ENCODE measurements at regions of chr6 and their contacts with region 1.

Region 1: GRCh38 chr6:16183187-16183664 is 54.3 kb downstream of the MYLIP start:
- DNase-seq: peak; percentile 60
- H3K4me3 Mint-ChIP-seq: no peak overlapping the region
- H3K27ac Mint-ChIP-seq: no peak overlapping the region
- H3K4me1 Mint-ChIP-seq: peaks cover 21% of the 10 kb centered on the region
- H3K27me3 Mint-ChIP-seq: peaks cover 12% of the 10 kb centered on the region

Region 2: DNA sequence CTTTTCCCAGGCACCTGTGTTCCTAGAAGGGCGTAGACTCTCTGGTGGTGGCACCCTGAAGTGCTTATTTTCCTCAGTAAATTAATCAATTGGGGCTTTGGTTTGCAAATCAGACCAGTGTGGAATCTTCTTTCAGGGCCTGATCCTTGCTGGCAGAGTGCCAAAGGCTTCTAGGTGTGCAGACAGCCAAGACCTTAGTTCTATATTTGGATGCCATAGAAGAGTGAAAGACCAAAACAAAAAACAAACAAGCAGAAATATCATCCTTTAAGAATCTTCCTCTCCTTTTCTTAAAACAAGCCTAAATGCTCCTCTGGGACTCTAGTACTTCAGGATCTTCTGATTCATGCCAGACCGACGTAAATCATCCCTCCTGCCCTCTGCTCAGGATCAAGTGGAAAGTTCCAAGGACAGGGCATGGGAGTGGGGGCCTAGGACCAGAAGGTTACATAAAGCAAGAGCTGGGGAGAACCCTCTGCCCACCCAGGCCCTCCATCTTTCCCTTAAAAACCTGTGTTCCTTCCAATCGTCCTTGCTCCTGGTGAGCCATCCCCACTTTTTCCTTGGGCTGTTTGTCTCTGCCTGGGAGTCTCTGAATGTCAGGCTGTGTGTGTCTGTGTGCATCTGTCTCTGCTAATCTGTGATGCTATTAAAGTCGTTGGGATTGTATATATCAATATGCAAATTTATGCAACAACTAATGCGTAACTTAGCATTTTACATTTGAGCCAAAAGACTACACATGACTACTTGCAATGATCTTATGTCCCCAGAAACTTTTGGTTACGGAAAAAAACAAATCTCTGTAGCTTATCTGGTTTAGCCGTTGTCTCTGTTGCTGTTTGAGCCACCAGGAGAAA is 124.8 kb before region 1 on chr6:
- intact Hi-C with region 1: loop called (anchors 10 kb)
- DNase-seq: no peak
- H3K4me3 Mint-ChIP-seq: no peak overlapping the region
- H3K27ac Mint-ChIP-seq: no peak overlapping the region
- H3K4me1 Mint-ChIP-seq: no peaks in the 10 kb centered on the region
- H3K27me3 Mint-ChIP-seq: peaks cover 1% of the 10 kb centered on the region

Region 3: DNA sequence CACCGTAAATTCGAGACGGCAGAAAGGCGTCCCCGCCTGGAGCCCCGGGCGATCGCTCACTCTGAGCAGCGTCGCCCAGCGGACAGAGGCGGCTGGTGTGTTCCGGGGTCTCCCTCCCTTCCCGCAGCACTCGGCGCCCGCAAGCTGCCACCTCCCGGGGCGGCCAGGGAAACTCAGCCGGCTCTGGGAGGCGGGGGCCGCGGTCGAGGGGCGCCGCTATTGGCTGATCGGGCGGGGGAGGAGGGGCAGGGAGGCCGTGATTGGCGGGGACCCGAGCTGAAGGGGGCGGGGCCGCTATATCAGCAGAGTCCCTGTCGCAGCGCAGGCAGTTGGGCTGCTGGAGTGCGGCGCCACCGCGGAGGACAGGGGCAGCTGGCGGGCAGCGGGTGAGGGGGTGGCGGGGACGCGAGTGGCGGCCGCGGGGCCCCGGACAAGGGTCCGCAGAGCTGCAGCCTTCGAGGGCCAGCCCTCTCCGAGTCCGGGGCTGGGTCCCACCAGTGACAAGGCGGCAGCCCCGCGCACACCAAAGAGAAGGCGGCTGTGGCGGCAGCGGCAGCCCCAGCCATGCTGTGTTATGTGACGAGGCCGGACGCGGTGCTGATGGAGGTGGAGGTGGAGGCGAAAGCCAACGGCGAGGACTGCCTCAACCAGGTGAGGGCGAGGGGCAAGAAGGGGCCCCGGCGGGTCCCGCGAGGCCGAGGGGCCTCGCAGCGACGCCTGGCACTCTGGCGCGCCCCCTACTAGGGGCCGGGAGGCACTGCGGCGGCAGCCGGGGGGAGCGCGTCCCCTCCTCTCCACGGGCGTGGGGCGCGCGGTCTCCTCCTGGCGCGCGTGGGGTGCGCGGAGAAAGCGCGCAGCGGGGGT is 54.2 kb before region 1 on chr6 and contains the start of gene MYLIP:
- intact Hi-C with region 1: loop called (anchors 1 kb)
- DNase-seq: peak; percentile 98
- H3K4me3 Mint-ChIP-seq: peak within 1 kb of the TSS; percentile 91
- H3K27ac Mint-ChIP-seq: peak within 1 kb of the TSS; percentile 93
- H3K4me1 Mint-ChIP-seq: peaks cover 32% of the 10 kb centered on the region
- H3K27me3 Mint-ChIP-seq: peaks cover 20% of the 10 kb centered on the region
- total RNA-seq, gene MYLIP: 18.3 and 18.5 TPM in 2 replicates

Region 4: DNA sequence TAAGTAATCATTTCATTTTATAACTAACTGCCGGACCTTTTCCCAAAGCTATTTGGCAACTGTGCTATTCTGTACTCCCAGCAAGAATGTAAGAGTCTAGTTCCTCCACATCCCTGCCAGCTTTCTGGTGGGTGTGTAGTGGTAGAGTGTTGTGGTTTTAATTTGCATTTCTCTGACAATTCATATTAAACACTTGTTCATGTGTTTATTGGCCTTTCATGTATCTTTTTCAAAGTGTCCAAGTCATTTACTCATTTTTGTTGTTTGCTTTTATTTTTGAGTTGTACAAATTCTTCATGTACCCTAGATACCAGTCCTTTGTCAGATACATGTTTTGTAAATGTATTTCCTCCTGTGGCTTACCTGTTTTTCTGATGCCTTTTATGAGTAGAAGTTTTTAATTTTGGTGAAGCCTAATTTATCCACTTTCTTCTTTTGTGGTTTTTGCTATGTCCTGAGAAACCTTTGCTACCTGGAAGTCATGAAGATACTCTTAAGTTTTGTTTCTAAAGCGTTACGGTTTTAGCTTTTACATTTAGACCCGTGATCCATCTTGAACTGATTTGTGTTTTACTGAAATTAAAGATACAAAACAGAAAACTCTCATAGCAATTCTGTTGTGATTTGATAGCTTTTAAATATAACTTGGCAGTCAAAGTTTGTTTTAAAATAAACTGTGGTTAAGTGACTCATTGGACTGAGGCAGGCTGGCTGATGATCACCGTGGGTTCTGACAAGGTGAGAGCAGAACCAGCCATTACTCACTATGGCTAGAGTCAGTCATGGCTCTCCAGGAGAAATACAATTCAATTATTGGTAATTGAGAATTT is 46.4 kb before region 1 on chr6:
- intact Hi-C with region 1: loop called (anchors 2 kb)
- DNase-seq: peak; percentile 71
- H3K4me3 Mint-ChIP-seq: peak overlapping the region; percentile 71
- H3K27ac Mint-ChIP-seq: peak overlapping the region; percentile 93
- H3K4me1 Mint-ChIP-seq: peaks cover 60% of the 10 kb centered on the region
- H3K27me3 Mint-ChIP-seq: no peaks in the 10 kb centered on the region

Measured in activated CD4-positive, alpha-beta T cell treated with anti-CD3 and anti-CD28 coated beads, Interleukin-2, amount 10 ng/mL, durations not matched to agents 24 days and 14 days (primary cell).